A549 (cell line): ENCODE measurements at regions of chr19 and their contacts with region 1.

Region 1: GRCh38 chr19:42440357-42441048 is 2.2 kb downstream of the CXCL17 start:
- DNase-seq: peak; percentile 87 to 95
- ATAC-seq: peak; percentile 73 to 85
- H3K4me3 ChIP-seq: no peak overlapping the region
- H3K27ac ChIP-seq: no peak overlapping the region
- H3K4me1 ChIP-seq: peaks cover 30% of the 10 kb centered on the region
- CTCF ChIP-seq: peak; percentile 99
- EP300 ChIP-seq: no peak
- POLR2A ChIP-seq: no peak
- RAD21 ChIP-seq: peak; percentile 38 to 50

Region 2: GRCh38 chr19:42113641-42114348 is 326.7 kb before region 1 on chr19:
- CTCF ChIA-PET with region 1: interaction called, 20 read pairs
- POLR2A ChIA-PET with region 1: no interaction called
- DNase-seq: peak; percentile 88 to 97
- ATAC-seq: peak; percentile 75 to 90
- H3K4me3 ChIP-seq: no peak overlapping the region
- H3K27ac ChIP-seq: peak overlapping the region; percentile 57 to 75
- H3K4me1 ChIP-seq: peaks cover 28% of the 10 kb centered on the region
- CTCF ChIP-seq: peak; percentile 55
- EP300 ChIP-seq: no peak
- POLR2A ChIP-seq: no peak
- RAD21 ChIP-seq: no peak

Region 3: DNA sequence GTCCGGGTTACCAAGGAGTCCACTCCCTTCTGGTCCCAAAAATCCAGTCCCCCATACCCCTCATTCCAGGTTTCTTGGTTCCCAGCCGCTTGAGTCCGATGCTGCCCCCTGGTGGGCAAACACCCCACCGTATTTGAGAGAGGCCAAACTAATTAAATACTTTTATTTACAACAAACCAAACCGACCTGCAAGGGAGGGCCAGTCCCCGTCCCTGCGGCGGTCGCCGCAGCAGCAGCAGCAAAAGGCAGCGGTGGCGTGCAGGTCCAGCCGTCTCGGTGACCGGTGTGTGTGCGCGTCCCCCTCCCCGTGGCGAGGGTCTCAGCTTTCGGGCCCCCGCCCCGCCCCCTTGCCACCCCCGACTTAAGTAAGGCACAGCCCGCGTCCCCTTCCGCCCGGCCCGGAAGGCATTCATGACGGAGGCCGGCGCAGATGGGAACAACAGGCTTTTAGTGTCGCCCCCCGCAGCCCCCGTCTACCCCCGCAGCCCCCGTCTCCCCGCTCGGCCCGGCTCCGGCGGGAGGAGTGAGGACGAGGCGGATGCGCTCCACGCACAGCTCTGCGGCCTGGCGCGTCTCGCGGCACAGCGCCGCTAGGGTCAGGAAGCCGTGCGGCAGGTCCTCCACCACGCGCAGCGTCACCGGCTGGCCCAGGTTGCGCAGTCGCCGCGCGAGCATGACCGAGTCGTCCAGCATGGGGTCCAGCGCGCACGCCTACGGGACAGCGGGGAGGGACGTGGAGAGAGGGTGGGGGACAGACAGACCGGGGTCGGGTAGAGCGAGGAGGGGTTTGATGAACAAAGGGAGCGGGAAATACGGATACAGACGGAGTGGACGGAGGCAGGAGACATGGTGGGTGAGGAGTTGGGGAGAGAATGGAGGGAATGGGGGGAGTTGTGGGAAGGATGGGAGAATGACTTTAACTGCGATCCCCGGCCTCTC is 38.9 kb before region 1 on chr19:
- CTCF ChIA-PET with region 1: interaction called, 23 read pairs
- POLR2A ChIA-PET with region 1: interaction called, 3 read pairs
- DNase-seq: peak; percentile 89 to 96
- ATAC-seq: peak; percentile 63 to 75
- H3K4me3 ChIP-seq: peak overlapping the region; percentile 56
- H3K27ac ChIP-seq: peak overlapping the region; percentile 72 to 84
- H3K4me1 ChIP-seq: peaks cover 19% of the 10 kb centered on the region
- CTCF ChIP-seq: peak; percentile 99
- EP300 ChIP-seq: no peak
- POLR2A ChIP-seq: peak; percentile 91
- RAD21 ChIP-seq: peak in 1 of 2 experiments; percentile 67; a peak in 4 of 5 replicates

Region 4: DNA sequence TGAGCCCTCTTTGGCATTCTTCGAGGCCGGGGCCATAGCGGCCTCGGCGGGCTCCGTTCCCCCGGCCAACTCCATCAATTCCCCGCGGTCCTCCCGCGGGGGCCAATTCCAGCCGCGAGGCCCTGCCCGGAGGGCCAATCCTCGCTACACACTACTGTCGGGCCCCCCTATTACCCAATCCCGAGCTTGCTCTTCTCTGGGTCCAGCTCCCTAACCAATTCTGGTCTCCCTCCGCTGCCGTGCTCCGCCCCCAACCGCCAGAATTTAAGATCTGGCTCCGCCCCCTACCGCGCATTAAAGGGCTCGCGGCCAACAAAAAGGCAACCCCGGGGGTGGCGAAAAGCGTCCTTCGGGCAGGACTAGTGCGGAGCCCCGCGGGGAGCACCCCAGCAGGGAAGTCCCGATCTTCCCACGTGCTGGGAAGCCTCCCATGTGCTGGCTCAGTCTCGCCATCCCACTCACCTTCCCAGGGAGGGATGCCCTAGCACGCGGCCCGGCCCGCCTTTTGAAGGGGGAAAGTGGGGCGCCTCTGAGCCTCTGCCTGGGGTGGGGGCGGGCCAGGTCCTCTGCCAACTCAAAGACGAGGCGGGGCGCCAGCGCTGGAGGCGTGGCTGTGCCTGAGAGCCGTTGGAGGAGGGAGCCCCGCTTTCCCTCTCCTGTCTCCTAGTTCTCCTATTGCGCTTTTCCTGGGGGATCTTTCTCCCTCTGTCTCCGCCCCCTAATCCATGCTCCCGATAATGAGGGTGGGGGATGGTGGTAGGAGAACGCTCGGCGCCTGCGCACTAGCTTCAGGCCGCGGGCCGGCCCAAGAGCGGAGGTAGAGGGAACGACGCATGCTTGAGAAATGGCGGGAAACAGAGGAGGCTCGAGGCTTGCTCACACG is 16.8 kb before region 1 on chr19:
- CTCF ChIA-PET with region 1: interaction called, 74 read pairs
- POLR2A ChIA-PET with region 1: interaction called, 4 read pairs
- DNase-seq: peak; percentile 94 to 100
- ATAC-seq: peak; percentile 80 to 96
- H3K4me3 ChIP-seq: peak overlapping the region; percentile 48
- H3K27ac ChIP-seq: peak overlapping the region; percentile 52 to 78
- H3K4me1 ChIP-seq: peaks cover 18% of the 10 kb centered on the region
- CTCF ChIP-seq: no peak
- EP300 ChIP-seq: no peak
- POLR2A ChIP-seq: no peak
- RAD21 ChIP-seq: no peak

Region 5: DNA sequence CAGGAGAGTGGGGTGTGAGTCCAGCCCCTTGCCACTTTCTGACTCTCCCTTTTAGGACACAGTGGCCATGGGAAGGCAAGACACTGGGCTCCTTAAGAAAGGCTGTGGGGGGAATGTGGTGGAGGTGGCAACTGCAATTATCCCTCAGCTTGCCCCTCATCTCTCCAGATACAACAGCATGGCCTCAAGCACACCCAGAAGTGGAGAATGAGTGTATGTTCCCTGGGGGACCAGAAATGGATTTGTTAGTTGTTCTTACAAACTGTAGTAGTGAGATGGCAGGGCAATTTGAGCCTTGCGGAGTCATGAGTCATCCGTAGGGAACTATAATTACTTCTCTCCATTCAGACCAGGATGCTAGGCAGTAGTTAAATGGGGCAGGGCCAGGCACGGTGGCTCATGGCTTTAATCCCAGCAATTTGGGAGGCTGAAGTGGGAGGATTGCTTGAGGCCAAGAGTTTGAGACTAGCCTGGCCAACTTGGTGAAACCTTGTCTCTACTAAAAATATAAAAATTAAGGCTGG is 27.8 kb after region 1 on chr19:
- CTCF ChIA-PET with region 1: interaction called, 29 read pairs
- POLR2A ChIA-PET with region 1: no interaction called
- DNase-seq: peak in 1 of 2 experiments; percentile 55
- ATAC-seq: peak; percentile 41 to 67; a peak in 4 of 6 replicates
- H3K4me3 ChIP-seq: no peak overlapping the region
- H3K27ac ChIP-seq: peak overlapping the region in 1 of 2 experiments; percentile 34; a peak in 2 of 6 replicates
- H3K4me1 ChIP-seq: peaks cover 33% of the 10 kb centered on the region
- CTCF ChIP-seq: no peak
- EP300 ChIP-seq: no peak
- POLR2A ChIP-seq: no peak
- RAD21 ChIP-seq: no peak